ENCODE measurements at regions of chr19 and their contacts with region 1.

Region 1: DNA sequence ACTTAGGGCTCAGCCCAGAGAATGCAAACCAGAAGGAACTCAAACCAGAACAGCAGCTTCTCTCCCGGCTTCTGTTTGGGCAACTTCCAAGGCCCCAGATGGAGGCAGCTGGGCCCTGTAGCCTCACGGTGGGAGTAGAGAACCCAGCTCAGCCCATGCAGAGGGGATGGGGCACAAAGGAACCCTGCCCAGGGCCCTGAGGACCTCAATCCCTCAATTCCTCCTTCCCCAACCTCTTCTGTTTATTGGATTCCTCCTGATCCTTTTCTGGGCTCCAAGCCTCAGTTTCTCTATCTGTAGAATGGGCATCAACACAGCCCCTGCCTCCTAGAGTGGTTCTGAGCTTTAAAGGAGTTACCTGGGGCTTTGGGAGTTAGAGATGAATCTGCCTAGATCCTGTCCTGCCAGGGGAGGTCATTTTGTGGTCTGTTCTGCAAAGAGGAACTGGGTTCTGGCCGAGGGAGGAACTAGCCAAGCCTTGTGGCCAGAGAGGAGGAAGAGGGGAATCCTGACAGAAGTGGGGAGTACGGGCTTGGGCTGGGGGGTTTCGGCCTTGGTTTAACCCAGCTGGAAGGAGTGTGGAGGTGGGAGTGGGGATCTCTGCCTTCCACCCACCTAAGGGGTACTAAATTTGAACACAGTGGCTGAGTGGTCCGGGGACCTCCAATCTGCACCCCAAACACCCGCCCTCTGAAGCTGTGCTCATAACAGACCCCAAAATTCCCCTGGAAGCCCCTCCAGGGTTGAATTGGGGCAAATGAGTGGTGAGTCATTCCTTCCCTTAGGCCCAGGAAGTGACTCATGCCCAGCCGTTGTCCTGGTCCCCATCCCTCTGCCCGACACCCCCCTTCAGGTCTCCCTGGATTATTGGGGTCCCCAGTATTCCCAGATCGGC is 2.7 kb downstream of the ADGRE5 start:
- DNase-seq: peak; percentile 44
- H3K4me3 ChIP-seq: no peak overlapping the region
- H3K27ac ChIP-seq: no peak overlapping the region
- H3K4me1 ChIP-seq: peaks cover 35% of the 10 kb centered on the region
- H3K27me3 ChIP-seq: no peaks in the 10 kb centered on the region
- CTCF ChIP-seq: no peak

Region 2: DNA sequence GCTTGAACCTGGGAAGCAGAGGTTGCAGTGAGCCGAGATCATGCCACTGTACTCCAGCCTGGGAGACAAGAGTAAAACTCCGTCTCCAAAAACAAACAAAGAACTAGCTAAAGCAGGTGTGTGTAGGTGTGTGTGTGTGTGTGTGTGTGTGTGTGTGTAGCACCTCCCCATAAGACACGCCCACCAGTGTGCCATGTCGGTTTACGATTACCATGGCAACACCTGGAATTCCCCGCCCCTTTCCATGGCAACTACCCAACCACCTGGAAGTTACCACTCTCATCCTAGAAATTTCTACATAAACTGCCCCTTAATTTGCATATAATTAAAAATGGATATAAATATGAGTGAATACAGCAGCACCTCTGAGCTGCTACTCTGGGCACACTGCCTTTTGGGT is 83.6 kb before region 1 on chr19:
- CTCF ChIA-PET with region 1: no interaction called
- dilution Hi-C with region 1: no loop called
- in situ Hi-C with region 1: no loop called
- intact Hi-C with region 1: no loop called
- DNase-seq: peak; percentile 5
- H3K4me3 ChIP-seq: no peak overlapping the region
- H3K27ac ChIP-seq: no peak overlapping the region
- H3K4me1 ChIP-seq: no peaks in the 10 kb centered on the region
- H3K27me3 ChIP-seq: no peaks in the 10 kb centered on the region
- CTCF ChIP-seq: no peak

Region 3: DNA sequence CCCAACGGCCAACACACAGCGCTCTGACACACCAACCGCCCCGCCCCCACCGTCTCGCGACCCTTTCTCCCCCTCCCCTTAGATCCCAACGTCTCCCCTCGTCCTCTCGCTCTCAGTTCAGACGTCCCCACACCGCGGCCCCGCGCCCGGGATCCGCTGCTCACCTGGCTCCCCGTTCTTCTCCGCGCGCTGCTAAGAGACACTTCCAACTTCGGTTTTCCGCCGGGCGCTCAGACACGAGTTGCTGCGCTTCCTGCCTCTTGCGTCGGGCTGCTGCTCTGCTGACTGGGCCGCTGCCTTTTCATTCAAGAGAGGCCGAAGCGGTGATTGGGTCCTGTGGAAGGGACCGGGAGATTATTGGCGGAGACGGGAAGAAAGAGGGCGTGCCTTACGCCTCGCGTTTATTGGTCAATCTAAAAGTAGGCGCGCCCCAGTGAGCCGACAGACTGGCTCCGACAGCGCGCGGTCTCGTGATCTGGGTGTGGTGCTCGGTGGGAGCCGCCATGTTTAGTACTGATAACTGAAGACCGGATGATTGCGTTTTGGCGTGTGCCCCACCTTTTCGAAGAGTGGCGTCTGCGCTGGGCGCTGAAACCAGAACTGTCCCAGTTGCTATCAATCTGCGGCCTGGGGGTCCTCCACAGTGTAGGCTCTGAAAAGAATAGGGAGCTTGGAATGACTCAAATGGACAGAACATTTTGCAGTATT is 35.4 kb after region 1 on chr19 and contains the start of gene DDX39A:
- CTCF ChIA-PET with region 1: no interaction called
- dilution Hi-C with region 1: loop called (anchors 5 kb)
- in situ Hi-C with region 1: no loop called
- intact Hi-C with region 1: no loop called
- DNase-seq: peak; percentile 99
- H3K4me3 ChIP-seq: peak within 1 kb of the TSS; percentile 80 to 98 (median 94)
- H3K27ac ChIP-seq: peak within 1 kb of the TSS; percentile 80
- H3K4me1 ChIP-seq: peaks cover 17% of the 10 kb centered on the region
- H3K27me3 ChIP-seq: no peaks in the 10 kb centered on the region
- CTCF ChIP-seq: no peak
- total RNA-seq, gene DDX39A: 34.0 to 74.4 TPM

Region 4: GRCh38 chr19:14599548-14600147 is 215.7 kb after region 1 on chr19:
- CTCF ChIA-PET with region 1: no interaction called
- dilution Hi-C with region 1: no loop called
- in situ Hi-C with region 1: no loop called
- intact Hi-C with region 1: no loop called
- DNase-seq: no peak
- H3K4me3 ChIP-seq: no peak overlapping the region
- H3K27ac ChIP-seq: no peak overlapping the region
- H3K4me1 ChIP-seq: no peaks in the 10 kb centered on the region
- H3K27me3 ChIP-seq: no peaks in the 10 kb centered on the region
- CTCF ChIP-seq: no peak

Region 5: DNA sequence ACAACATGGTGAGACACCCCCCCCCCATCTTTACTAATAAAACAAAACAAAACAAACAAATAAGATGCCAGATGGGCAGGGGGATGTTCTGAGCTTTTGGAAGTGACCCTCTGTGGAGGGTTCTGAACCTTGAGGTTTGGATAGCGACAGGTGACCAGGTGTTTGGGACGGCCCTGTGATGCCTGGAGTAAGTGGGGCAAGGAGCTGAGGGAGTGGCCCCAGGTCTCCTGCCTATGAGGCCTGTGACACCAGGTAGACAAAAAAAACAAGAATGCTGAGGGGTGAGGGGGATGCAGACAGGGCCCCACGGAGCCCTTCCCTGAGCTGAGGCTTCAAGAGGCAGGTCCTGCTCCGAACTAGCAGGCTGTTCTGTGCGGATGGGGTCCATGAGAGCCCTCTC is 385.3 kb after region 1 on chr19:
- CTCF ChIA-PET with region 1: no interaction called
- dilution Hi-C with region 1: no loop called
- in situ Hi-C with region 1: no loop called
- intact Hi-C with region 1: no loop called
- DNase-seq: no peak
- H3K4me3 ChIP-seq: no peak overlapping the region
- H3K27ac ChIP-seq: no peak overlapping the region
- H3K4me1 ChIP-seq: no peaks in the 10 kb centered on the region
- H3K27me3 ChIP-seq: no peaks in the 10 kb centered on the region
- CTCF ChIP-seq: no peak